GM12878 (cell line): ENCODE measurements at regions of chr11 and their contacts with region 1.

Region 1: DNA sequence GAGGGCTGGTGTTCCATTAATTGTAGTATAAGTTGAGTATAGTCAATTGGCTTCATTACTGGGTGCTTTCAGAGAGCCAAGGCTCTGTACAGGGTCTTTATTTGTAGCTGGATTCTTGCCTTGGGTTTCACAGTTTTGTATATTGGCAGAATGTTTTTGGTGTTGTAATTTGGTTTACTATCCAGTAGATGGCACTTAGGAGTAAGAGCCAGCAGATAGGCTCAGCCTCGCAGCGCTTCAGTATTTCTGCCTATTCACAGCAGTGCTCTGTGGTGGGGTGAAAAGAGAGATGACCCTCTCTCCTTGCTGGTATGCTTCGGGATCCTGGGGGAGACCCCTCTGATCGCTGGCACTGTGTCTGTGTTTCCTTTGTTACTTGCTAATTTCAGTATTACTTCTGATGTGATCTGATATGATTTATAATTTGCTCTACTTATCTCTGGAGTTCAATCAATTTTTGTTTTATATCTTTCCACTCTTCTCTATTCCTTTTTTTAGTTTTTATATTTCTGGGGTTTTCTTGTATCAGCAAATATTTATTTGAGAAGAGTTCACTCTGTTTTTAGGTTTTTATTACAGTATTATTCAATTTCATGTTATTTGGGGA is 52.2 kb downstream of the ANO5 start:
- DNase-seq: no peak
- ATAC-seq: peak; percentile 98
- H3K4me3 ChIP-seq: no peak overlapping the region
- H3K27ac ChIP-seq: no peak overlapping the region
- H3K4me1 ChIP-seq: no peaks in the 10 kb centered on the region
- H3K27me3 ChIP-seq: no peaks in the 10 kb centered on the region
- CTCF ChIP-seq: peak; percentile 62 to 76 (median 75)
- EP300 ChIP-seq: no peak
- POLR2A ChIP-seq: no peak
- RAD21 ChIP-seq: peak; percentile 64

Region 2: GRCh38 chr11:22177186-22177585 is 67.9 kb before region 1 on chr11:
- CTCF ChIA-PET with region 1: interaction called, 17 read pairs
- POLR2A ChIA-PET with region 1: interaction called, 3 read pairs
- RAD21 ChIA-PET with region 1: interaction called, 3 read pairs
- SMC1A ChIA-PET with region 1: interaction called, 4 read pairs
- in situ Hi-C with region 1: no loop called
- intact Hi-C with region 1: no loop called
- DNase-seq: no peak
- ATAC-seq: peak; percentile 79
- H3K4me3 ChIP-seq: no peak overlapping the region
- H3K27ac ChIP-seq: no peak overlapping the region
- H3K4me1 ChIP-seq: no peaks in the 10 kb centered on the region
- H3K27me3 ChIP-seq: no peaks in the 10 kb centered on the region
- CTCF ChIP-seq: peak in 1 of 3 experiments; percentile 21; a peak in 1 of 6 replicates
- EP300 ChIP-seq: no peak
- POLR2A ChIP-seq: no peak
- RAD21 ChIP-seq: peak; percentile 10; the same call in 1 of the 2 replicates

Region 3: DNA sequence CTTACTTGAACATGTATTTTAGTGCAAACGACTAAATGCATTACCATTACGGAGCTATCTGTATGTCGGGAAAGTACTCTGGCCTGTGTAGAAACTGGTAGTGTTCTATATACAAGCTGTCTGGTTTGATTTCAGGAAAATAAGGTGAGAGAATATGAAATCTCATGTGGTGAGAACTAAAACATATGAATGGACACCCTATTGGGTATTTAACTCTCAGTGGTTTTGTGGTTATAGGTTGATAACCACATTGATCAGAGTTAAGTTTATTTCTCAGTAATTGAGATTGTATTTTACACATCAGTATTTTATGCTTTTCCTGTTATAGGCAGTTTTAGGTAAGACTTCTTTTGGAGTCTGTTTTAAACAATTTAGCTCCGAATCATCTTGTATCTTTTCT is 41.8 kb before region 1 on chr11:
- CTCF ChIA-PET with region 1: interaction called, 14 read pairs
- POLR2A ChIA-PET with region 1: interaction called, 3 read pairs
- RAD21 ChIA-PET with region 1: interaction called, 3 read pairs
- SMC1A ChIA-PET with region 1: interaction called, 14 read pairs
- in situ Hi-C with region 1: no loop called
- intact Hi-C with region 1: no loop called
- DNase-seq: no peak
- ATAC-seq: peak; percentile 91
- H3K4me3 ChIP-seq: no peak overlapping the region
- H3K27ac ChIP-seq: no peak overlapping the region
- H3K4me1 ChIP-seq: no peaks in the 10 kb centered on the region
- H3K27me3 ChIP-seq: no peaks in the 10 kb centered on the region
- CTCF ChIP-seq: no peak
- EP300 ChIP-seq: peak in 1 of 2 experiments; percentile 29; a peak in 1 of 4 replicates
- POLR2A ChIP-seq: no peak
- RAD21 ChIP-seq: no peak

Region 4: DNA sequence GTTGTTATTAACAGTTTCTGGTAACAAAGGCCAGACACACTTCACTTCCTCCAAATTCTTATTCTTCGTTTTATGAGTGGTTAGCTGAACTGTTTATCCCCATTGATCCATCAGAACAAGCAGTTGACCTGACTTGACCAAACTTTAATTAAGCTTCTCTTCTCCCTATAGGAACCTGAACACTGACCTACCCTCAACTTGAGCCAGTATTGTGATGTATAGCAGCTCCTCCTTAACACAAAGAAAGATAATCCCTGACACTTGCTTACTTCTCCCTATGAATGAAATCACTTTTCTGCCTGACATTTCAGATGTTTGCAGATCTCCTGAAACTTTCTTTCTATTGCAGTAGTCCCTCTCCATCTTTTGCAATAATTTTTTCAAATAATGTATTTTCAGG is 10.3 kb before region 1 on chr11:
- CTCF ChIA-PET with region 1: interaction called, 35 read pairs
- POLR2A ChIA-PET with region 1: interaction called, 3 read pairs
- RAD21 ChIA-PET with region 1: interaction called, 3 read pairs
- SMC1A ChIA-PET with region 1: interaction called, 7 read pairs
- in situ Hi-C with region 1: no loop called
- intact Hi-C with region 1: no loop called
- DNase-seq: no peak
- ATAC-seq: no peak
- H3K4me3 ChIP-seq: no peak overlapping the region
- H3K27ac ChIP-seq: no peak overlapping the region
- H3K4me1 ChIP-seq: no peaks in the 10 kb centered on the region
- H3K27me3 ChIP-seq: no peaks in the 10 kb centered on the region
- CTCF ChIP-seq: no peak
- EP300 ChIP-seq: no peak
- POLR2A ChIP-seq: no peak
- RAD21 ChIP-seq: no peak

Region 5: GRCh38 chr11:22304337-22304961 is 59.4 kb after region 1 on chr11:
- CTCF ChIA-PET with region 1: interaction called, 58 read pairs
- POLR2A ChIA-PET with region 1: no interaction called
- RAD21 ChIA-PET with region 1: interaction called, 14 read pairs
- SMC1A ChIA-PET with region 1: interaction called, 20 read pairs
- in situ Hi-C with region 1: no loop called
- intact Hi-C with region 1: loop called (anchors 1 kb)
- DNase-seq: no peak
- ATAC-seq: peak; percentile 66
- H3K4me3 ChIP-seq: no peak overlapping the region
- H3K27ac ChIP-seq: no peak overlapping the region
- H3K4me1 ChIP-seq: no peaks in the 10 kb centered on the region
- H3K27me3 ChIP-seq: no peaks in the 10 kb centered on the region
- CTCF ChIP-seq: peak; percentile 40 to 64 (median 48); a peak in 5 of 6 replicates
- EP300 ChIP-seq: no peak
- POLR2A ChIP-seq: no peak
- RAD21 ChIP-seq: peak; percentile 73